ENCODE measurements at regions of chr5 and their contacts with region 1.

Region 1: GRCh38 chr5:174951146-174951780 is 226.9 kb downstream of the MSX2 start:
- DNase-seq: no peak

Region 2: GRCh38 chr5:175443514-175444059 is 492.3 kb after region 1 on chr5:
- intact Hi-C with region 1: loop called (anchors 1 kb)
- DNase-seq: no peak

Measured in cardiac septum (tissue), 1 donor.